ENCODE measurements at regions of chr6 and their contacts with region 1.

Region 1: GRCh38 chr6:137873273-137873762 is 6.3 kb downstream of the TNFAIP3 start:
- DNase-seq: peak; percentile 86
- H3K4me3 ChIP-seq: peak overlapping the region in 2 of 4 donors; percentile 7 to 74
- H3K27ac ChIP-seq: peak overlapping the region; percentile 91 to 98 (median 97)
- H3K4me1 ChIP-seq: peaks cover 13 to 68% (median 34%) of the 10 kb centered on the region in 4 donors
- H3K27me3 ChIP-seq: no peaks in the 10 kb centered on the region
- CTCF ChIP-seq: no peak
- EP300 ChIP-seq: peak; percentile 62
- POLR2A ChIP-seq: peak; percentile 22

Region 2: GRCh38 chr6:137799950-137800568 is 73.3 kb before region 1 on chr6:
- in situ Hi-C with region 1: no loop called
- intact Hi-C with region 1: loop called (anchors 10 kb)
- DNase-seq: peak; percentile 44
- H3K4me3 ChIP-seq: no peak overlapping the region
- H3K27ac ChIP-seq: peak overlapping the region in 2 of 4 donors; percentile 14 to 49
- H3K4me1 ChIP-seq: peaks cover 0 to 41% (median 7%) of the 10 kb centered on the region in 4 donors
- H3K27me3 ChIP-seq: no peaks in the 10 kb centered on the region
- CTCF ChIP-seq: peak; percentile 39 to 55 (median 49)
- EP300 ChIP-seq: no peak
- POLR2A ChIP-seq: no peak

Region 3: DNA sequence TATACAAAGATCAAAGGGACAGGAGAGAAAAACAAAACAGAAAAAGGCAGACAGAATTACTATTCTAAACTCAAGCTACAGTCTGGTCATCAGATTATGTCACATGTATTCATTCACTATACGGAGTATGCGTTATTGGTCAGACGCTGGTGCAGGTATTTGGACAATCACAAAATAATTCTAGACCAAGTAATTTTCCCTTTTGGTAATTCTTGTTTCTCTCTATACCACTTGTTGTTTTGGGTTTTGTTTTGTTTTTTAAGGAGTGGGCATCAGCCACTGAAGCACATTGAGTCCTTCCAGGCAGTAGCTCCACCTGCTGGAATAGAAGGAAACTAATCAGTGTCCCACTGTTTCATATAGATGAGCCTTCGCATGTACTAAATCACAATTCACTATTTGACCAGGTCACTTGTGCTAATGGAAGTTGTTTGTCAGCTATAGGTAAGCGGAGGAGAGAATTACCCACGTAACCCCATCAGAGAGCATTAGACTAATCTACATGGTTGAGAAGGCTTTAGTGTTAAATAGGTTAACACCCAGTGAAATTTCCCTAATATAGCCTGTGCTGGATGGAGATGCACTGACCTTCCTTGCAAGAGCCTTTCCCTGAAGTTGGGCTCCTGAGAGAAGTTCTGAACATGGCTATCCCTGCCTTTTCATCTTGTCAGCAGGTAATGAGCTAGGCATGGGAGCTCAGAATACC is 71.6 kb after region 1 on chr6:
- in situ Hi-C with region 1: loop called in 1 of 4 experiments (anchors 5 kb)
- intact Hi-C with region 1: no loop called
- DNase-seq: no peak
- H3K4me3 ChIP-seq: no peak overlapping the region
- H3K27ac ChIP-seq: no peak overlapping the region
- H3K4me1 ChIP-seq: no peaks in the 10 kb centered on the region
- H3K27me3 ChIP-seq: no peaks in the 10 kb centered on the region
- CTCF ChIP-seq: peak; percentile 64 to 77 (median 73)
- EP300 ChIP-seq: no peak
- POLR2A ChIP-seq: no peak

Region 4: DNA sequence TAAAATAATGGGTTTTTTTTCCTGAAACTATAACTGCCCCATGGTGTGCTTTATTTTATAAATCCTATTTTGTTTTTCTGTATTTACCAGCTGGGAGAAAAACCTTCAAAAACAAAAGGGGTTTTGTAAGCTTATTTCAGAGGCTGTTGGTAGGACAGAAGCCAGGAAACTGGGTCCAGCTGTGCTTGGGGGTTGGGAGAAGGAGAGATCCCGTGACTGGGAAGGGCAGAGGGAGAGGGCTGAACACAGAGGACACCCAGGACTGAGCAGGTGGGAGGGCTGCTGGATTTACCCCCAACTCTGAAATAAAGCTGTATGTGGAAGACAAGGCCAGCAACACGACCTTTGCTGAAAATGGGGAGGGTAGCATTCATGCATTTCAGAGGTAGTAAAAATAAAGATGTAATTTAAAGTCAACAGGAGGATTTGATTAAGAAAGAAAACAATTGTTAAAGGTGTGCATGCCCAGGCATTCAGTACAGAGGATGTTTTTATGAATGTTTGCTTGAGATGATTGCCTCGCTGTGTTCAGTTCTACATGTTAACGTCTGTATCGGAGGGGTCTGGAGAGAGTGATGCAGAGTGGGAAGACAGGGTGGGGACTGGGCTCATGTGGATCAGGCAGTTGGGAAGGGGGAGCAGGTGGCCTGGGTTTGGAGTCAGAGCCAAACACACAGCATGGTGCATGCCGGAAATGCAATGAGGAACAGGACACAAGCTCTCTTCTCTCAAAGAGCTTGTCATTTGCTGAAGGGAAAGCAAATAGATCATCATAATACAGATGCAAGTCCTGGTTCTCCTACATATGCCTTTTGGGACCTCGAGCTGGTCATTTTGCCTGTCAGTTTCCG is 309.8 kb after region 1 on chr6:
- in situ Hi-C with region 1: no loop called
- intact Hi-C with region 1: no loop called
- DNase-seq: peak; percentile 24
- H3K4me3 ChIP-seq: no peak overlapping the region
- H3K27ac ChIP-seq: peak overlapping the region; percentile 0 to 61 (median 40)
- H3K4me1 ChIP-seq: peaks cover 0 to 14% (median 7%) of the 10 kb centered on the region in 4 donors
- H3K27me3 ChIP-seq: no peaks in the 10 kb centered on the region
- CTCF ChIP-seq: no peak
- EP300 ChIP-seq: no peak
- POLR2A ChIP-seq: no peak

Measured in transverse colon (tissue), 4 donors.